Calu3 (cell line): ENCODE measurements at regions of chr3 and their contacts with region 1.

Region 1: GRCh38 chr3:87503900-87504508 is 227.6 kb upstream of the POU1F1 start:
- DNase-seq: peak; percentile 63
- H3K4me3 Mint-ChIP-seq: no peak overlapping the region
- H3K27ac Mint-ChIP-seq: no peak overlapping the region
- H3K4me1 Mint-ChIP-seq: no peaks in the 10 kb centered on the region
- H3K27me3 Mint-ChIP-seq: no peaks in the 10 kb centered on the region
- CTCF ChIP-seq: peak; percentile 51

Region 2: DNA sequence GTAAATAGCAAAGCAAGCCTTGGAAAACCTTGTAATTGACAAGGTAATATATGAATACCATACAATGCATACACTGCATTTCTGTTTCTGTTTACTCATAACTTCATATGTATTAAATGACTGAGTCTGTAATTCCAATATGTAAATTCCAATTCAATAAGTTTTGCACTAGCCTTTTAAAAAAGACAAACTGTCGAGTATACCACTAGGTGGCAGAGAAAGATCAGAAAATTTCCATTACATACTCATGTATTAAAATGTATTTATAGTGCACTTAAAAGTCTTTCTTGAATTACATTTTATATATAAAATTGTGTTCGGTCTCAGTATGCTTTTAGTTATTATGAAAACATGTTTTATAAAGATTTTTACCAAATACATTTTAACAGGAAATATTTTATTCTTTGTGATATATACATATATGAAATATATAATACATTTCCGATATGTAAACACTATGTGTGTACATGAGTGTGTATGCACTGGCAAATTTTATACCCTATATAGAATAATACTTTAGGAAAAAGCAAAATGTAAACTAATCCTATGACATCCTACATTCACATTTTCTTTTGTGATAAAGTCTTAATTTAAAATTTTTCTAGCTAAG is 729.8 kb before region 1 on chr3:
- CTCF ChIA-PET with region 1: no interaction called
- intact Hi-C with region 1: loop called (anchors 5 kb)
- DNase-seq: no peak
- H3K4me3 Mint-ChIP-seq: no peak overlapping the region
- H3K27ac Mint-ChIP-seq: no peak overlapping the region
- H3K4me1 Mint-ChIP-seq: no peaks in the 10 kb centered on the region
- H3K27me3 Mint-ChIP-seq: no peaks in the 10 kb centered on the region
- CTCF ChIP-seq: no peak

Region 3: GRCh38 chr3:87033205-87033604 is 470.8 kb before region 1 on chr3:
- CTCF ChIA-PET with region 1: no interaction called
- intact Hi-C with region 1: no loop called
- DNase-seq: no peak
- H3K4me3 Mint-ChIP-seq: no peak overlapping the region
- H3K27ac Mint-ChIP-seq: no peak overlapping the region
- H3K4me1 Mint-ChIP-seq: peaks cover 8% of the 10 kb centered on the region
- H3K27me3 Mint-ChIP-seq: no peaks in the 10 kb centered on the region
- CTCF ChIP-seq: no peak

Region 4: GRCh38 chr3:87260270-87260669 is 243.7 kb before region 1 on chr3:
- CTCF ChIA-PET with region 1: interaction called, 5 read pairs
- intact Hi-C with region 1: loop called (anchors 1 kb)
- DNase-seq: peak; percentile 62
- H3K4me3 Mint-ChIP-seq: no peak overlapping the region
- H3K27ac Mint-ChIP-seq: no peak overlapping the region
- H3K4me1 Mint-ChIP-seq: no peaks in the 10 kb centered on the region
- H3K27me3 Mint-ChIP-seq: no peaks in the 10 kb centered on the region
- CTCF ChIP-seq: no peak

Region 5: DNA sequence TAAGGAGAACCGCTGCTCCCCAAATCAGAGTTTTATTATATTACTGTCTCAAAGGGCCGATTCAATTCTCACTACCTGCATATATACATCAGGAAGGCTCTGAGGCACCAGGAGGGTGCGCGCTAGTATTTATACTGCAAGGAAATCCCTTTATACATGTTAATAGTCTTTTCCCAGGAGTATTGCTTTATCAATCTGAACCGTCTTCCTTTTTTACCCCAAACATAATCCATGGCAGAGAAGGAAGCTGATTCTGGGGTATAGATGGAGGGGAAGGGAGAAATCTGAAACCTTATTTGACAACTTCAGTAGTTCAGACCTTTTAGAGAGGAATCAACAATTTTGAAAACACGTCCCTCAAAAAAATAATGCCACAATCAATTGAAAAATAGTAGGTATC is 227.5 kb before region 1 on chr3 and contains the start of gene POU1F1:
- CTCF ChIA-PET with region 1: no interaction called
- intact Hi-C with region 1: no loop called
- DNase-seq: no peak
- H3K4me3 Mint-ChIP-seq: no peak within 1 kb of the TSS
- H3K27ac Mint-ChIP-seq: no peak within 1 kb of the TSS
- H3K4me1 Mint-ChIP-seq: no peaks in the 10 kb centered on the region
- H3K27me3 Mint-ChIP-seq: no peaks in the 10 kb centered on the region
- CTCF ChIP-seq: no peak
- total RNA-seq, gene POU1F1: not detected in 2 replicates

Region 6: GRCh38 chr3:87298111-87298718 is 205.8 kb before region 1 on chr3:
- CTCF ChIA-PET with region 1: interaction called, 4 read pairs
- intact Hi-C with region 1: loop called (anchors 1 kb)
- DNase-seq: peak; percentile 39
- H3K4me3 Mint-ChIP-seq: no peak overlapping the region
- H3K27ac Mint-ChIP-seq: no peak overlapping the region
- H3K4me1 Mint-ChIP-seq: no peaks in the 10 kb centered on the region
- H3K27me3 Mint-ChIP-seq: no peaks in the 10 kb centered on the region
- CTCF ChIP-seq: peak; percentile 27

Region 7: GRCh38 chr3:87350364-87351199 is 153.4 kb before region 1 on chr3:
- CTCF ChIA-PET with region 1: interaction called, 21 read pairs
- intact Hi-C with region 1: loop called (anchors 1 kb)
- DNase-seq: no peak
- H3K4me3 Mint-ChIP-seq: no peak overlapping the region
- H3K27ac Mint-ChIP-seq: peak overlapping the region; percentile 79
- H3K4me1 Mint-ChIP-seq: peaks cover 61% of the 10 kb centered on the region
- H3K27me3 Mint-ChIP-seq: no peaks in the 10 kb centered on the region
- CTCF ChIP-seq: peak; percentile 62